Left colon (tissue), 2 donors: ENCODE measurements at regions of chr2 and their contacts with region 1.

Region 1: DNA sequence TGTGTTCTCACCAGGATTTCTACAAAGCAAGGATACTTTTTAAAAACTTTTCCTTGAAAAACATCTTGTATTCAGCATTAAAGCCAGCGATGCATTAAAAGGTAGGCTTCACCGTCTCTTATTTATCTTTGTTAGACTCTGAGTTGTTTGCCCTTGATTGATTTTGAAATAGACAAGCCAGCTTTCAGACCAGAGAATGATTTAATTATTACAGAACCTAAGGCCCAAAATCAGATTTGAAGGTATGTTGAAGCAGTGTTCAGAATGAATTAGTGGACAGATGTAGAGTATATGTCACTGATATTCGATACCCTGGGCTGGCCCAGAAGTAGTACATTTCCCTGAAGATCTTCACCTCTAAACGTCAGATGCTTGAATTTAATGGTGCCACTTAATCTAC is 136.4 kb downstream of the THSD7B start:
- DNase-seq: no peak
- ATAC-seq: no peak

Region 2: GRCh38 chr2:135494503-135494902 is 1407.2 kb before region 1 on chr2:
- intact Hi-C with region 1: loop called in 1 of 2 experiments (anchors 5 kb)
- DNase-seq: no peak
- ATAC-seq: no peak